ENCODE measurements at regions of chr4 and their contacts with region 1.

Region 1: DNA sequence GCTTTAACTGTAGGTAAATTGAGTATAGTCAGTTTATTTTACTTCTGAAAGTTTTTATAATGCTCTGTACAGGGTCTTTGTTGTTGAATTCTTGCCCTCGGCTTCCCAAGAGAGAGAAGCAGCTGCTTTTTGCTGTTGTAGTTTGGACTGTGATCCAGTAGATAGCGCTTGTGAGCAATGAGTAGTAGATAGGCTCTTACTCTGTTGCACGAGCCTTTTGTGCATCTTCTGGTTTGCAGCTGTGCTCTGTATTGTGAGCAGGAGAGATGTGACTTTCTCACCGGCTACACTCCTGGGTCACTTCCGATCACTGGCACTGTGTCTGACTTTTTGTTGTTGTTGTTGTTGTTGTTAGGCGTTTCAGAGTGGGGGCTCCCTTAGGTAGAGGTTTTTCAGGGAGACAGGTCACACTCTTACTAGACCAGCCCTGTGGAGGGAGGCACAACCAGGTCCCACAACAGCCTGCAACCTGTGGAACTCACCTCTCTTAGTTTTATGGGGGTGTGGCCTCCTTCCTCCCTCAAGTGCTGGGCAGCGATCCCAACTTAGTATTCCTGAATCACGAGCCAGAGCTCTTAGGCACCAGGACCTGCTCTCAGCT is 822.1 kb upstream of the GALNTL6 start:
- H3K4me3 Mint-ChIP-seq: no peak overlapping the region
- H3K27ac Mint-ChIP-seq: no peak overlapping the region
- H3K4me1 Mint-ChIP-seq: no peaks in the 10 kb centered on the region
- H3K27me3 Mint-ChIP-seq: no peaks in the 10 kb centered on the region

Region 2: GRCh38 chr4:170446782-170447181 is 544.3 kb before region 1 on chr4:
- intact Hi-C with region 1: no loop called
- H3K4me3 Mint-ChIP-seq: no peak overlapping the region
- H3K27ac Mint-ChIP-seq: no peak overlapping the region
- H3K4me1 Mint-ChIP-seq: no peaks in the 10 kb centered on the region
- H3K27me3 Mint-ChIP-seq: no peaks in the 10 kb centered on the region

Region 3: DNA sequence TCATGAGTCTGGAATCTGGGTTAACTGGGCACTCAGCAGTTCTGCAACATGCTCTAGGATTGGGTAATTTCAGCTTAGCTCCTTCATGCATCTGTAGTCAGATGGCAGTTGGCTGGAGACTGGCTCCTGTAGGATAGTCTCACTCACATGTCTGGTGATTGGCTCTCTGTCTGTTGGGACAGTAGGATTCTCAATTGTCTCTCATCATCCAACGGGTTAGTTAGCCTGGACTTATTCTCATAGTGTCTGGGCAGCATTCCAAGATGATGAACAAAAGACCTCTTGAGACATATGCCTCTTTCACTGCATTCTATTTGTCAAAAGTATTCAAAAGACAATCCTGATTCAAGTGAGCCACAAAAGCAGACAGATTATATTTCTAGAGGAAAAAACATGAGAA is 26.5 kb after region 1 on chr4:
- intact Hi-C with region 1: no loop called
- H3K4me3 Mint-ChIP-seq: no peak overlapping the region
- H3K27ac Mint-ChIP-seq: no peak overlapping the region
- H3K4me1 Mint-ChIP-seq: no peaks in the 10 kb centered on the region
- H3K27me3 Mint-ChIP-seq: no peaks in the 10 kb centered on the region

Region 4: DNA sequence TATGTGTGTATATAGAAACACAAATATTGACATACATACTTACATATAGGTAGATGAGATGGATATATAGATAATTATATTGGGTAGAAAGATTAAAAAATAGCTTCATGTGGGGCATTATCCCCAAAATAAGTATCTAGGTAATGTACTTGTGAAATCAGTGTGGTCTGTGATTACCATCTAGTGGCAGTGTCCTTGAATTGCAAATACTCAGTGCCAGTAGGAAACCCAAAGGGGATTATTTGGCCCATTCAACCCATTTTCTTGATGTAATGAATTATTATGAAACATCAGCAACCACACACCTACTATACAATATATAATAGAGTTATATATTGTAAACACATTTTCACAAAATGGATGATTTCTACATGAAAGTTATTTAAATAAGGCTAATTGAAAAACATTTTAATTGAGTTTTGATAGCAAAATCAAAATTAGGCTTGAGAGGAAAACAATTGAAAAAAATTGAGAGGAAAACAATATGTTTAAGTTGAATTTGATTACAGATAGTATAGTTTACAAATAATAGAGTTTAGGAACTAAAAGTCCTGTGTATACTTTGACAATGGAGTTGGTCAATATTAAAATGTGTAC is 1211.5 kb after region 1 on chr4:
- intact Hi-C with region 1: loop called (anchors 5 kb)
- H3K4me3 Mint-ChIP-seq: no peak overlapping the region
- H3K27ac Mint-ChIP-seq: no peak overlapping the region
- H3K4me1 Mint-ChIP-seq: peaks cover 20% of the 10 kb centered on the region
- H3K27me3 Mint-ChIP-seq: no peaks in the 10 kb centered on the region